A549 (cell line): ENCODE measurements at regions of chr1 and their contacts with region 1.

Region 1: GRCh38 chr1:147242439-147243227 is at the start of gene CHD1L:
- DNase-seq: peak; percentile 85 to 96
- ATAC-seq: peak; percentile 94 to 96
- H3K4me3 ChIP-seq: peak within 1 kb of the TSS; percentile 91
- H3K27ac ChIP-seq: peak within 1 kb of the TSS; percentile 97 to 98
- H3K4me1 ChIP-seq: peaks cover 40% of the 10 kb centered on the region
- CTCF ChIP-seq: peak; percentile 90
- EP300 ChIP-seq: no peak
- POLR2A ChIP-seq: peak; percentile 54
- RAD21 ChIP-seq: peak; percentile 89 to 97
- polyA plus RNA-seq, gene CHD1L: 48.4 and 61.2 TPM in 2 replicates

Region 2: GRCh38 chr1:147084273-147085096 is 158.1 kb before region 1 on chr1:
- CTCF ChIA-PET with region 1: interaction called, 11 read pairs
- POLR2A ChIA-PET with region 1: interaction called, 35 read pairs
- DNase-seq: peak; percentile 75 to 89
- ATAC-seq: peak; percentile 89 to 93
- H3K4me3 ChIP-seq: peak overlapping the region; percentile 52
- H3K27ac ChIP-seq: peak overlapping the region; percentile 88 to 92
- H3K4me1 ChIP-seq: 0 out of 3 replicates have a peak, but pooled peaks cover 3% of the 10 kb centered on the region
- CTCF ChIP-seq: no peak
- EP300 ChIP-seq: no peak
- POLR2A ChIP-seq: peak; percentile 98
- RAD21 ChIP-seq: no peak

Region 3: DNA sequence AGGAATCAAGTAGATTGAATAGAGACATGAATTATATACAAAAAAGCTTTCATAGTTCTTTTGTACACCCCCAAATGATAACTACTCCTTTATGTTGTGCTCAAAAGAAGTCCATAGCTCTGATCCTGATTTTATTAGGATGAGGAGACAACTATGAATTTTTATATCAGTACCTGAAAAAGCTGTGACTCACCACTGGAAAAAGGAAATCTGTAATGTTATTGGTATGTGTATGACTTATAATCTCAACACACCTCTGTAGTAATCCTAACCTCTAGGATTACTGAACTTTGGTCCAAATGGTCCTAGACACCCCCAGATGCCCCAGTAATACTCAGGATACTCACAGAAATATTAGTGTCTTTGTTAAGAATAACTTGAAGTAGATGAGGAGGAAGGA is 80.5 kb before region 1 on chr1:
- CTCF ChIA-PET with region 1: interaction called, 41 read pairs
- POLR2A ChIA-PET with region 1: interaction called, 8 read pairs
- DNase-seq: no peak
- ATAC-seq: no peak
- H3K4me3 ChIP-seq: no peak overlapping the region
- H3K27ac ChIP-seq: no peak overlapping the region
- H3K4me1 ChIP-seq: peaks cover 10% of the 10 kb centered on the region
- CTCF ChIP-seq: no peak
- EP300 ChIP-seq: no peak
- POLR2A ChIP-seq: no peak
- RAD21 ChIP-seq: no peak

Region 4: DNA sequence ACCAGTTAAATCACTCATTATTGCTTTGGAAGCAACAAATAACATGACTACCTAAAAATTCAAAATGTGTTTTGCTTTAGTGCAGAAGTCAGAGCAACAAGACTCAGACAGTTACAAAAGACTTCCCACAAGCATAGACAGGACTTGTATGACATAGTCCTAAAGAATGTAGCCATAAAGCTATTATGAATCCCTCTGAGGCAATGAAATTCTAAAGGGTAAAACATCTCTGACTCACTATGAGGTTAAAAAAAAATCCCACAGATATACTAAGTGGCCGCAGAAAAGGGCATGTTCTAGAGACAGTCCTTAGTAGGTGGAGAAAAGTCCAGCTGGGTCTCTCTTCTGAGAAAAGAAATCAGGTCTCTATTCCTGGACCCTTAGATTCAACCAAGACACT is 75.3 kb before region 1 on chr1:
- CTCF ChIA-PET with region 1: interaction called, 51 read pairs
- POLR2A ChIA-PET with region 1: interaction called, 8 read pairs
- DNase-seq: peak; percentile 28 to 60
- ATAC-seq: peak; percentile 63 to 74
- H3K4me3 ChIP-seq: no peak overlapping the region
- H3K27ac ChIP-seq: peak overlapping the region; percentile 30 to 66; a peak in 4 of 6 replicates
- H3K4me1 ChIP-seq: peaks cover 44% of the 10 kb centered on the region
- CTCF ChIP-seq: no peak
- EP300 ChIP-seq: no peak
- POLR2A ChIP-seq: no peak
- RAD21 ChIP-seq: no peak

Region 5: GRCh38 chr1:147172168-147172992 is 70.3 kb before region 1 on chr1 and contains the start of gene PRKAB2:
- CTCF ChIA-PET with region 1: interaction called, 51 read pairs
- POLR2A ChIA-PET with region 1: interaction called, 13 read pairs
- DNase-seq: peak; percentile 80 to 97
- ATAC-seq: peak; percentile 94 to 96
- H3K4me3 ChIP-seq: peak within 1 kb of the TSS; percentile 87
- H3K27ac ChIP-seq: peak within 1 kb of the TSS; percentile 88 to 93
- H3K4me1 ChIP-seq: peaks cover 36% of the 10 kb centered on the region
- CTCF ChIP-seq: peak; percentile 92
- EP300 ChIP-seq: no peak
- POLR2A ChIP-seq: peak; percentile 61
- RAD21 ChIP-seq: peak; percentile 60 to 90; a peak in 4 of 5 replicates
- polyA plus RNA-seq, gene PRKAB2: 20.3 and 22.4 TPM in 2 replicates

Region 6: DNA sequence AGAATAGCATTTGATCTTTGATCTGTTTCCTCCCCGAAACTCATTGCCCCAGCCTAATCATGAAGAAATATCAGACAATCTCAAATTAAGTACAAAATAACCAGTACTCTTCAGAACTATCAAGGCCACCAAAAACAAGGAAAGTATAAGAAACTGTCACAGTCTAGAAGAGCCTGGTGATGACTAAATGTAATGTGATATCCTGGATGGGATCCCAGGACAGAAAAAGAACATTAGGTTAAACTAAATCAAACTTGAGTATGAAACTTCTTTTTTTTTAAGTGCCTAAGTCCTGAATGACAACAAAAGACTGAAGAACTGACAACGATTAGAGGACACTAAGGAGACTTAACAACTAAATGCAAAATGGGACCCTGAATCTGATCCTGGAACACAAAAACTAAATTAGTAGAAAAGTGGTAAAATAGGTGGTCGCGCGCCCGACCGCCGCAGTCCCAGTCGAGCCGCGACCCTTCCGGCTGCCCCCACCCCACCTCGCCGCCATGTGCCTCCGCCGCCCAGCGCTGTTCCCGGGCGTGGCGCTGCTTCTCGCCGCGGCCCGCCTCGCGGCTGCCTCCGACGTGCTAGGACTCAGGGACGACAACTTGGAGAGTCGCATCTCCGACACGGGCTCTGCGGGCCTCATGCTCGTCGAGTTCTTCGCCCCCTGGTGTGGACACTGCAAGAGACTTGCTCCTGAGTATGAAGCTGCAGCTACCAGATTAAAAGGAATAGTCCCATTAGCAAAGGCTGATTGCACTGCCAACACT is 64.8 kb before region 1 on chr1:
- CTCF ChIA-PET with region 1: interaction called, 51 read pairs
- POLR2A ChIA-PET with region 1: interaction called, 13 read pairs
- DNase-seq: no peak
- ATAC-seq: no peak
- H3K4me3 ChIP-seq: no peak overlapping the region
- H3K27ac ChIP-seq: no peak overlapping the region
- H3K4me1 ChIP-seq: no peaks in the 10 kb centered on the region
- CTCF ChIP-seq: no peak
- EP300 ChIP-seq: no peak
- POLR2A ChIP-seq: no peak
- RAD21 ChIP-seq: no peak

Region 7: GRCh38 chr1:147223740-147224615 is 18.7 kb before region 1 on chr1:
- CTCF ChIA-PET with region 1: interaction called, 23 read pairs
- POLR2A ChIA-PET with region 1: interaction called, 3 read pairs
- DNase-seq: no peak
- ATAC-seq: no peak
- H3K4me3 ChIP-seq: no peak overlapping the region
- H3K27ac ChIP-seq: no peak overlapping the region
- H3K4me1 ChIP-seq: no peaks in the 10 kb centered on the region
- CTCF ChIP-seq: no peak
- EP300 ChIP-seq: no peak
- POLR2A ChIP-seq: no peak
- RAD21 ChIP-seq: no peak